Right lobe of liver (tissue), 6 donors: ENCODE measurements at regions of chr4 and their contacts with region 1.

Region 1: GRCh38 chr4:109690690-109691410 is 12.4 kb downstream of the CASP6 start:
- DNase-seq: no peak
- ATAC-seq: no peak
- H3K4me3 ChIP-seq: no peak overlapping the region
- H3K27ac ChIP-seq: no peak overlapping the region
- H3K4me1 ChIP-seq: no peaks in the 10 kb centered on the region
- H3K27me3 ChIP-seq: no peaks in the 10 kb centered on the region
- CTCF ChIP-seq: no peak
- POLR2A ChIP-seq: no peak

Region 2: GRCh38 chr4:109815151-109816081 is 124.6 kb after region 1 on chr4 and contains the start of gene GAR1:
- intact Hi-C with region 1: loop called in 1 of 2 experiments (anchors 10 kb)
- DNase-seq: peak; percentile 90 to 94 (median 94)
- ATAC-seq: peak; percentile 99 to 100 (median 99)
- H3K4me3 ChIP-seq: peak within 1 kb of the TSS; percentile 72 to 82 (median 80)
- H3K27ac ChIP-seq: peak within 1 kb of the TSS; percentile 79 to 84 (median 79)
- H3K4me1 ChIP-seq: peaks cover 0 to 11% (median 4%) of the 10 kb centered on the region in 4 donors
- H3K27me3 ChIP-seq: no peaks in the 10 kb centered on the region
- CTCF ChIP-seq: no peak
- POLR2A ChIP-seq: no peak
- total RNA-seq, gene GAR1: 2.9 to 7.1 (median 4.4) TPM

Region 3: GRCh38 chr4:109952612-109953011 is 261.8 kb after region 1 on chr4:
- intact Hi-C with region 1: no loop called
- DNase-seq: no peak
- ATAC-seq: no peak
- H3K4me3 ChIP-seq: no peak overlapping the region
- H3K27ac ChIP-seq: no peak overlapping the region
- H3K4me1 ChIP-seq: no peaks in the 10 kb centered on the region
- H3K27me3 ChIP-seq: no peaks in the 10 kb centered on the region
- CTCF ChIP-seq: no peak
- POLR2A ChIP-seq: no peak